ENCODE measurements at regions of chr17 and their contacts with region 1.

Region 1: DNA sequence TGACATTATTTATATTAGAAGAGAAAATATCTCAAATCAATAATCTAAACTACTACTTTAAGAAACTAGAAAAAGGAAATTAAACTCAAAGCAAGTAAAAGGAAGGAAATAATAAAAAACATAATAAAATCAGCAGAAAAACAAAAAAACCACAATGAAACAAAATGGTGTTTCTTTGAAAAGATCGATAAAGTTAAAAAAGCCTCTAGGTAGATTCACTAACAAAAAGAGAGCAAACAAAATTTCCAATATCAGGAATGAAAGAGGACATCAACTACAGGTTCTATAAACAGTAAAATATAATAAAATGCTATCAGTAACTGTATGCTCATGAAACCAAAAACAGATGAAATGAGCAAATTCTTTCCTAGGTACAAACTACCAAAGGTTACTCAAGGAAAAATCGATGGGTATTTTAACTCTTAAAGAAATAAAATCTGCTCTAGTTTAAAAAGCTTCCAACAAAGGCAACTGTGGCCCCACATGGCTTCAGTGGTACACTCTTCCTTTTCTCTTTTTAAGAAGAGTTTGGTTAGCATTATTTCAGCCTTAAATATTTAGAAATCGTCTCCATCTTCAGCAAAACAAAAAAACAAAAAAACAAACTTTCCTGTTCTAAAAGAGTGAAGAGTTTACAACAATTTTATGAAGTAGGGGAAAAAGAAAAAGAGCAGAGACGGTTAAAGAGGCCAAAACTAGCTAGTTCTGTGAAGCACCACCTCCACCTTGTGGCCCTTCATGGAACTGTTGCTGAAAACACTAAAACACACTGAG is 102.2 kb downstream of the TRIM37 start:
- DNase-seq: peak in 1 of 2 donors; percentile 46
- H3K4me3 ChIP-seq: no peak overlapping the region
- H3K27ac ChIP-seq: no peak overlapping the region
- H3K4me1 ChIP-seq: no peaks in the 10 kb centered on the region
- H3K27me3 ChIP-seq: no peaks in the 10 kb centered on the region
- CTCF ChIP-seq: peak; percentile 93 to 96 (median 95)
- POLR2A ChIP-seq: no peak

Region 2: DNA sequence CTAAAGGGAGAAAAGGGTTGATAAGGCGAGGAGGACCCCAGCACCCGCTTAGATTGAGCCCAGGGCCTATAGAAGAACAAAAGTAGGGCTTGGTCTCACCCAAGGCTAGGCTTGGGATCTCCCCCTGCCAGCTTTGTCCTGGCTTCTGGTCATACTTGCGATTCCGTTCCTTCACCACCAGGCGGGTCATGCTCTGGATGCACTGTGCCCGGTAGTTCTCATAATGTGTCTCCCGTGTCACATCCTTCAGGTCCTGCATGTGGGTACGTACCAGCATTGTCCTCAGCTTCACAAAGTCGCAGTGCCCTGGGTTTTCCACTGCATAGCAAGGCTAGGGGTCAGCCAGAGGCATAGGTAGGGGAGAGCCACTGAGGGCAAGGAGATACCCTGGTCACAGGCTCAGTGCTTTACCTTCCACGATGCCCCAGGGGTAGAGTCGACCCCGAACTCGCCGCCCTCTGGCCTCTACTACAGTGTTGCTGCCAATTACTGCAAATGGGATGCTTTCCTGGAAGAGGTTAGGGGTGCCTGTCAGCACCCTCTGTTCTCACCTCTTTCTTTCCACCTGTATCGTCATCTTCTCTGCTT is 483.6 kb before region 1 on chr17:
- intact Hi-C with region 1: loop called (anchors 10 kb)
- DNase-seq: no peak
- H3K4me3 ChIP-seq: no peak overlapping the region
- H3K27ac ChIP-seq: peak overlapping the region; percentile 96 to 98
- H3K4me1 ChIP-seq: peaks cover 0 to 22% of the 10 kb centered on the region in 2 donors
- H3K27me3 ChIP-seq: no peaks in the 10 kb centered on the region
- CTCF ChIP-seq: no peak
- POLR2A ChIP-seq: no peak

Region 3: DNA sequence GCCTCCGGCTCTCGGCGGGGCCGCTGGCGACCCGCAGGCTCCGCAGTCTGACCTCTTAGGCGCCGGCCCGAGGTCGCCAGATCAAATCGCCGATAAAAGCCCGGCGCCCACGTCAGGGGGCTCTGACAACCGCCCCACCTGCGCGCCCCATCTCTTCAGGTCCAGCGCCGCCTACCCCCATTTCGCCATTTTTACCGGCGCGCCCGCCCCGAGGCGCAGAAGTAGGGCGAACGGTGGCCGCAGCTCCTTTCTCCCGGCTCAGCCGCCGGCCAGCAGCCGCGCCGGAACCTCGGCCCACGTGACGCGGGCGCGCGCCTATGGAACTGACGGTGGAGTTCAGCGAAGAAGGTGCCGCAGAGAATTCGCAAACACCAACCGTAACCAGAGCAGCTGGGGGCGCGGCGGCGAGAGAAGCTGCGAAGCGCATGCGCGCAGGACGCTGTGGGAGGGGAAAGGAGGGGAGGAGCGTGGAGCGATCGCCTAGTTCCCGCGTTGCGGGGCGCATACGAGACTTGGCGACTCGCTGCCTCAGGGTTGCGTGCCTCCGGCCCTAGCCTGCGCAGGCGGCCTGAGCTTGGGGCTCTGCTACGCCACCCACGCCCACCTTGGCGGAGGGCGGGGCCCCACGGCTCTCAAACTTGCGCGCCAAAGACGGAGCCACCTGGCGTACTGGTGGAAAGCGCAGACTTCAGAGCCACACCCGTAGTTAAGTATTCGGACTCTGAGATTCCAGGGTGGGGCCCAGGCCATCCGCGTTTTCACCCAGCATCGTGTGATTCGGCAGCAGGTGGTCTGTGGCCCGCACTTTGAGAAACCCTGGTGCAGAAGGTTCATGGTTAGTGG is 102.2 kb after region 1 on chr17 and contains the start of gene TRIM37:
- intact Hi-C with region 1: no loop called
- DNase-seq: peak; percentile 89 to 96
- H3K4me3 ChIP-seq: peak within 1 kb of the TSS; percentile 73 to 96 (median 89)
- H3K27ac ChIP-seq: peak within 1 kb of the TSS; percentile 89 to 90
- H3K4me1 ChIP-seq: peaks cover 0 to 6% of the 10 kb centered on the region in 2 donors
- H3K27me3 ChIP-seq: no peaks in the 10 kb centered on the region
- CTCF ChIP-seq: no peak
- POLR2A ChIP-seq: no peak
- total RNA-seq, gene TRIM37: 18.7 to 24.6 (median 20.9) TPM

Measured in breast epithelium (tissue), 4 donors.